ENCODE measurements at regions of chr10 and their contacts with region 1.

Region 1: DNA sequence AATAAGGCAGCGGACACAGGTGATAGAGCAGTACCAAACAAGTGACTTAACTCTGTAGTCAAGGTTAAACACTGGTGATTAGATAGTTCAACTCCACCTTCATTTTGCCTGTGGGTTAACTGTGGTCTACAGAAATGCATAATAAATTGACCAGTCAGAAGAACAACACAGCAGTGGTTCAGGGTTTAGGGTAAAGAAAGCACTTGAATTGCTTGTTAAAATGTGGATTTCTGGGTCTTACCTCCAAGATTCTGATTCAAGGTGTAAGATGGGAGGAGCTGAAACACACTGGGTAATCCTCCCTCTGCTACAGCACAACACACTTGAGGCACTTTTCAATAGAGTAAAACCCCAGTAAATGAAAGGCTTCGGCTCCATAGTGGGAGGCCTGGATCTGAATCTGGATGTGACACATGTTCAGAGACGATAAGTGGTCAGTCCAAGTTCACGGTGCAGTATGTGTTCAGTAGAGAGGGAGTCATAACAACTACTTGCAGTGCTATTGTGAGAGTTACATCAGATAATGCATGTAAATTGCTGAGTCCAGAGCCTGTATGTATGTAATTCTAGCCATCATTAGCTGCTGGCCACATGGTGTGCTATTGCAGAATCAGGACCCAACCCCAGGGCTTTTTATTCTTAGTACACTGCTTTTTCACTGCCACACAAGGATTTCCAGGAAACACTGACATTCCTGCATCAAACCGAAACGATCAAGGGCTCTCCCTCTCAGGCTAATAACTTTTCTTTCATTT is 141.7 kb downstream of the SORCS1 start:
- DNase-seq: peak; percentile 61 to 89 (median 70)
- ATAC-seq: peak; percentile 92
- H3K4me3 ChIP-seq: no peak overlapping the region
- H3K27ac ChIP-seq: peak overlapping the region; percentile 63
- H3K4me1 ChIP-seq: peaks cover 9 to 52% of the 10 kb centered on the region in 2 experiments; a peak in 3 of 5 replicates
- H3K27me3 ChIP-seq: no peaks in the 10 kb centered on the region
- CTCF ChIP-seq: peak in 2 of 3 experiments; percentile 23; a peak in 1 of 6 replicates
- EP300 ChIP-seq: peak; percentile 93
- POLR2A ChIP-seq: no peak
- RAD21 ChIP-seq: peak; percentile 16 to 31; a peak in 2 of 4 replicates

Region 2: GRCh38 chr10:106493751-106494150 is 529.0 kb before region 1 on chr10:
- CTCF ChIA-PET with region 1: no interaction called
- POLR2A ChIA-PET with region 1: no interaction called
- in situ Hi-C with region 1: no loop called
- intact Hi-C with region 1: no loop called
- DNase-seq: no peak
- ATAC-seq: no peak
- H3K4me3 ChIP-seq: no peak overlapping the region
- H3K27ac ChIP-seq: no peak overlapping the region
- H3K4me1 ChIP-seq: no peaks in the 10 kb centered on the region
- H3K27me3 ChIP-seq: no peaks in the 10 kb centered on the region
- CTCF ChIP-seq: no peak
- EP300 ChIP-seq: no peak
- POLR2A ChIP-seq: no peak
- RAD21 ChIP-seq: no peak

Region 3: GRCh38 chr10:107056182-107056581 is 33.4 kb after region 1 on chr10:
- CTCF ChIA-PET with region 1: no interaction called
- POLR2A ChIA-PET with region 1: interaction called, 3 read pairs
- in situ Hi-C with region 1: no loop called
- intact Hi-C with region 1: loop called (anchors 2 kb)
- DNase-seq: peak in 3 of 4 experiments; percentile 8 to 64 (median 38)
- ATAC-seq: peak; percentile 76
- H3K4me3 ChIP-seq: no peak overlapping the region
- H3K27ac ChIP-seq: peak overlapping the region; percentile 23; the same call in 2 of the 3 replicates
- H3K4me1 ChIP-seq: peaks cover 0 to 27% of the 10 kb centered on the region in 2 experiments; a peak in 4 of 5 replicates
- H3K27me3 ChIP-seq: no peaks in the 10 kb centered on the region
- CTCF ChIP-seq: no peak
- EP300 ChIP-seq: peak; percentile 30; the same call in 1 of the 2 replicates
- POLR2A ChIP-seq: no peak
- RAD21 ChIP-seq: no peak

Region 4: DNA sequence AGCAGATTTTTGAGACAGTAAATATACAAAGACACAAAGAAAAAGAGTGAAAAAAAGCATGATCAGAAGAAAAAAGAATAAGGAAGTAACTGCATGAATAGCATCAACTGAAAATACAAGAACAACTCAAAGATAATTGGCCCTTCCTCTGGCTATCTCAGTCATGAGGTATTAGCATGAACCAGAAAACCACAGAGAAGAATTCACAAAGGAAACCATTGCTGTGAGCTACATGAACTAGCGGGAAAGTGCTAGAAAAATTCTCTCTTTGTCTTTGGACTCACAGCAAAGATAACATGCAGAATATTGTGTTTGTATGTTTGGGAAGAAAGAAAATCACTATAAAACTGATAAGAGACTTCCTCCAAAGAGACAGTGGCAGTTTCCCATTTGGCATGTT is 58.9 kb after region 1 on chr10:
- CTCF ChIA-PET with region 1: no interaction called
- POLR2A ChIA-PET with region 1: no interaction called
- in situ Hi-C with region 1: no loop called
- intact Hi-C with region 1: loop called (anchors 2 kb)
- DNase-seq: peak in 1 of 4 experiments; percentile 25
- ATAC-seq: peak; percentile 32; the same call in 1 of the 3 replicates
- H3K4me3 ChIP-seq: no peak overlapping the region
- H3K27ac ChIP-seq: peak overlapping the region; percentile 33; the same call in 1 of the 3 replicates
- H3K4me1 ChIP-seq: peaks cover 8 to 26% of the 10 kb centered on the region in 2 experiments
- H3K27me3 ChIP-seq: no peaks in the 10 kb centered on the region
- CTCF ChIP-seq: no peak
- EP300 ChIP-seq: no peak
- POLR2A ChIP-seq: no peak
- RAD21 ChIP-seq: no peak

Region 5: GRCh38 chr10:107139237-107139636 is 116.5 kb after region 1 on chr10:
- CTCF ChIA-PET with region 1: no interaction called
- POLR2A ChIA-PET with region 1: no interaction called
- in situ Hi-C with region 1: no loop called
- intact Hi-C with region 1: loop called (anchors 10 kb)
- DNase-seq: no peak
- ATAC-seq: no peak
- H3K4me3 ChIP-seq: no peak overlapping the region
- H3K27ac ChIP-seq: no peak overlapping the region
- H3K4me1 ChIP-seq: no peaks in the 10 kb centered on the region
- H3K27me3 ChIP-seq: no peaks in the 10 kb centered on the region
- CTCF ChIP-seq: peak in 2 of 3 experiments; percentile 10 to 38; a peak in 2 of 6 replicates
- EP300 ChIP-seq: no peak
- POLR2A ChIP-seq: no peak
- RAD21 ChIP-seq: peak in 1 of 2 experiments; percentile 36; a peak in 3 of 4 replicates